Common myeloid progenitor, CD34-positive (primary cell): ENCODE measurements at regions of chr3 and their contacts with region 1.

Region 1: DNA sequence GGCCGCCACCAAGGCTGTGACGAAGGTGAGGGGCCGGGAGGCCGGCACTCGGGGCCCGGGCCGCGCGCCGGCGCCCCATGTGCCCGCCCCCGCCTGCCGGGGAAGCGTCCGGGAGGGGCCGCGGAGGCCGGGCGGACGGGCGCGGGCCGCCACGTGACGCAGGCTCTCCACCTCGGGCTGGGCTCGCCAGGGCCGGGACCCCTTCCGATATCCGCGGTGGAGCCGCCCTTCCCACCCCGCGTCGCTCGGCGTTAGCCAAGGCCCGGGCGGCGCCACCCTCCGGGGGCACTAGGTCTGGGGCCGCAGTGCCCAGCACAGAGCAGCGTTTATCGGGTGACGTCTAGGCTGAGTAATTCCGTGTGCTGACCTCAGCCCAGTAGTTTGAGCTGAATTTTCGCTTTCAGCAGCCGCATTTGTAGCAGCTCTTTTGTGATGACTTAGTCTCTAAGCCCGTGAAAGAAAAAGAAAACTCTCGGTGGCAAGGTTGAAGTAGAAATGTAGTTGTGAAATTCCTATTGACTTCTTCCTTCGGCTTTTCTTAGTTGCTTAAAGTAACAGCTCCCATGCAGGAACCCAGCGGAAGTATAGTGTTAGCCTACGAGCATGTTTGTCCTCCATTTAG is 885 bp downstream of the CDV3 start:
- DNase-seq: peak; percentile 74 to 84 (median 78)
- H3K4me3 ChIP-seq: peak overlapping the region; percentile 76 to 99 (median 91)
- H3K27ac ChIP-seq: peak overlapping the region; percentile 77 to 92
- H3K4me1 ChIP-seq: peaks cover 24 to 51% (median 40%) of the 10 kb centered on the region in 4 experiments
- H3K27me3 ChIP-seq: no peaks in the 10 kb centered on the region

Region 2: DNA sequence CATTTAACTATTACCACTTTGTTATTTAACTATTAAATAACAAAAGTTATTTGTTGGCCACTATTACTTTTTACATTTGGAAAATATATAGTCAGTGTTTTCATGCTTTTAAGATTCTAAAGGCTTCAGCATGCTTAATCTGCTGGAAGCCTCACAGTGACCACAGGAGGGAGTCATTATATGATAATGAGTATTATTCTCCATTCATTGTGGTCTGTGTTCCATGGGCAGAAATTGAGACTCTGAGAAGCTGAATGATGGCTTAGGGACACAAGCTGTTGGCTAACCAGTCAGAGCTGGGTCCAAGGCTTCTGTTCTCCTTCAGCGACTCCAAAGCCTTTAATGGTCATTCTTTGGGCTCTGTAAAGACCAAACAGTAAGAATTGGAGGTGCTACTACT is 109.8 kb before region 1 on chr3:
- CTCF ChIA-PET with region 1: interaction called, 13 read pairs
- POLR2A ChIA-PET with region 1: no interaction called
- DNase-seq: peak; percentile 25 to 63 (median 63)
- H3K4me3 ChIP-seq: no peak overlapping the region
- H3K27ac ChIP-seq: no peak overlapping the region
- H3K4me1 ChIP-seq: peaks cover 0 to 12% (median 8%) of the 10 kb centered on the region in 4 experiments
- H3K27me3 ChIP-seq: no peaks in the 10 kb centered on the region

Region 3: GRCh38 chr3:133588035-133588434 is 13.7 kb after region 1 on chr3:
- CTCF ChIA-PET with region 1: interaction called, 12 read pairs
- POLR2A ChIA-PET with region 1: interaction called, 4 read pairs
- DNase-seq: no peak
- H3K4me3 ChIP-seq: no peak overlapping the region
- H3K27ac ChIP-seq: no peak overlapping the region
- H3K4me1 ChIP-seq: no peaks in the 10 kb centered on the region
- H3K27me3 ChIP-seq: no peaks in the 10 kb centered on the region

Region 4: GRCh38 chr3:133674290-133674919 is 100.0 kb after region 1 on chr3:
- CTCF ChIA-PET with region 1: no interaction called
- POLR2A ChIA-PET with region 1: no interaction called
- DNase-seq: peak in 2 of 3 donors; percentile 12 to 38
- H3K4me3 ChIP-seq: peak overlapping the region in 5 of 7 experiments; percentile 15 to 55 (median 48)
- H3K27ac ChIP-seq: no peak overlapping the region
- H3K4me1 ChIP-seq: peaks cover 0 to 8% (median 7%) of the 10 kb centered on the region in 4 experiments
- H3K27me3 ChIP-seq: peaks cover 7 to 56% (median 26%) of the 10 kb centered on the region in 5 experiments

Region 5: GRCh38 chr3:133722935-133723334 is 148.6 kb after region 1 on chr3:
- CTCF ChIA-PET with region 1: no interaction called
- POLR2A ChIA-PET with region 1: no interaction called
- DNase-seq: no peak
- H3K4me3 ChIP-seq: no peak overlapping the region
- H3K27ac ChIP-seq: no peak overlapping the region
- H3K4me1 ChIP-seq: no peaks in the 10 kb centered on the region
- H3K27me3 ChIP-seq: no peaks in the 10 kb centered on the region